ENCODE measurements at regions of chr19 and their contacts with region 1.

Region 1: GRCh38 chr19:47152224-47153017 is 21.8 kb downstream of the SAE1 start:
- DNase-seq: no peak
- ATAC-seq: no peak
- H3K4me3 ChIP-seq: no peak overlapping the region
- H3K4me3 Mint-ChIP-seq: no peak overlapping the region
- H3K27ac ChIP-seq: no peak overlapping the region
- H3K27ac Mint-ChIP-seq: peak overlapping the region; percentile 27
- H3K4me1 ChIP-seq: peaks cover 49% of the 10 kb centered on the region
- H3K4me1 Mint-ChIP-seq: peaks cover 51% of the 10 kb centered on the region
- H3K27me3 ChIP-seq: no peaks in the 10 kb centered on the region
- H3K27me3 Mint-ChIP-seq: no peaks in the 10 kb centered on the region
- CTCF ChIP-seq: no peak

Region 2: DNA sequence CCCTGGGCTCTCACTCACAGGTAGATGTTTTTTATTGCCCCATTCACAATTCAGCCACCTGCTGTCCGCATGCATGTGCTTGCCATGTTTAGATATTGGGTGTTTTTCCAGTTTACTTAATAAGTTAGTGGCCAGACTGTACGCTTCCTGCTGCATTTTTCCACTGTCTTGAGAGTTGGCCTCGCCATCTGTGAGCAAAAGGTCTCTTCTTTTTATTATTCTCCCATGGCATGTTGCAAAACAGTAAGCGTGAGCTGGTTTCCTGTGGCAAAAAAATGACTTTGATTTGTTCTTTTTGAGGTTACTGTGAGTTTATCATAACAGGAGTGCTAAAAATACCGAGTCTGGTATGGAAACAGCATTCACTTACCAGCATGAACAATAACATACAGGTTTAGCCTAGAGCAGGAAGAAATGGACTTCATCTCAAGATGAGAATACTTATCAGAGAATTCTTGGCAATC is 24.2 kb after region 1 on chr19:
- CTCF ChIA-PET with region 1: interaction called, 6 read pairs
- POLR2A ChIA-PET with region 1: interaction called, 81 read pairs
- intact Hi-C with region 1: no loop called
- DNase-seq: peak in 11 of 14 experiments; percentile 22 to 82 (median 43)
- ATAC-seq: peak; percentile 85
- H3K4me3 ChIP-seq: peak overlapping the region; percentile 6
- H3K4me3 Mint-ChIP-seq: peak overlapping the region; percentile 81
- H3K27ac ChIP-seq: peak overlapping the region; percentile 60 to 68
- H3K27ac Mint-ChIP-seq: peak overlapping the region; percentile 98
- H3K4me1 ChIP-seq: peaks cover 56% of the 10 kb centered on the region
- H3K4me1 Mint-ChIP-seq: peaks cover 69% of the 10 kb centered on the region
- H3K27me3 ChIP-seq: no peaks in the 10 kb centered on the region
- H3K27me3 Mint-ChIP-seq: no peaks in the 10 kb centered on the region
- CTCF ChIP-seq: no peak

Region 3: DNA sequence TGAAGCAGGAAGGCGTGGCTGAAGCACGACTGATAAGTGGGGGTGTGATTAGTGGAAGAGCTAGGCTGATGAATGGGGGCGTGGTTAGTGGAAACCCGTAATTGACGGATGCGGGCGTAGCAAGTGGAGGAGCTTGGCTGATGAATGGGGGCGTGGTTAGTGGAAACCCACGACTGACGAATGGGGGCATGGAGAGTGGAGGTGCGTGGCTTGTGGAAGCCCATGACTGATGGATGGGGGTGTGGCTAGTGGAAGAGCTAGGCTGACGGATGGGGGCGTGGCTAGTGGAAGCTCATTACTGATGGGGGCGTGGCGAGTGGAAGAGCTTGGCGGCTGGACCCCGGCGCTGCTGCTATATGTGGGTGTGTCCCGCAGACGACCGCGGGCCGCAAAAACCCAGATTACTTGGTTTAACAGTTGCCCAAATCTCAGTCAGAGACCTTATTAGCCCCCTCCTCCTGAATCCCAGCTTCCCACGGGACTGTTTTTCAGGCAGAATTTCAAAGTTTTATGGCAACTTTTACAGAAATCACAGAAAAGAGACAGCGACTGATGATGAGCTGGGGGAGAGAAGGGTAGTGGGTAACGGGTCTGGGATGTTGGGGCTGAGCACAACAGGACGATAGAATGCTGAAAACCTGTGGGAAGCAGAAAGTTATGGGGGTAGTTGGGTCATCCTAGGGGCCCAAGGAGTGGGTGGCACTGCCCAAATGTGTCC is 275.9 kb after region 1 on chr19:
- CTCF ChIA-PET with region 1: no interaction called
- POLR2A ChIA-PET with region 1: no interaction called
- intact Hi-C with region 1: loop called in 1 of 2 experiments (anchors 2 kb)
- DNase-seq: peak; percentile 50 to 96 (median 75)
- ATAC-seq: peak; percentile 91
- H3K4me3 ChIP-seq: peak overlapping the region; percentile 29
- H3K4me3 Mint-ChIP-seq: no peak overlapping the region
- H3K27ac ChIP-seq: no peak overlapping the region
- H3K27ac Mint-ChIP-seq: no peak overlapping the region
- H3K4me1 ChIP-seq: peaks cover 38% of the 10 kb centered on the region
- H3K4me1 Mint-ChIP-seq: peaks cover 13% of the 10 kb centered on the region
- H3K27me3 ChIP-seq: peaks cover 36 to 43% of the 10 kb centered on the region in 2 experiments
- H3K27me3 Mint-ChIP-seq: peaks cover 56% of the 10 kb centered on the region
- CTCF ChIP-seq: no peak